BJ (cell line): ENCODE measurements at regions of chr15 and their contacts with region 1.

Region 1: DNA sequence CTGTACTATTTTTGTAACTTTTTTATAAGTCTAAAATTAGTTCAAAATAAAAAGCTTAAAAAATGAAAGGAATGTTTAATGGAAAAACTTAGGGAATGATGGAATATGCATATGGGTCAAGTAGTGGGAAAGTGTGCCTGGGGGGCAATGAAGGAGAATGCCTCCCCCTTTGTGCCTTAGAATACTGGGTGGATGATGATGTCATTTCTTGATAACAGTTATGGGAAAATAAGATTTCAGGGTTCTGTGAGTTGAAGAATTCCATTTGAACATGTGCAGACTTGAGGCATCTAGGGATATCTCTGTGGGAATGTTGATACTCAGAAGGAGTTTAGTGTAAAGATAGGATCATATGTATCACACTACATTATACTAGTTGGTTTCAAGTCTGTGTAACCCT is 13.8 kb downstream of the WDR93 start:
- DNase-seq: no peak
- H3K4me3 ChIP-seq: no peak overlapping the region
- H3K27me3 ChIP-seq: peaks cover 15% of the 10 kb centered on the region
- CTCF ChIP-seq: no peak

Region 2: GRCh38 chr15:89575146-89575655 is 129.2 kb before region 1 on chr15 and contains the start of gene TICRR:
- CTCF ChIA-PET with region 1: no interaction called
- POLR2A ChIA-PET with region 1: no interaction called
- DNase-seq: peak; percentile 99
- H3K4me3 ChIP-seq: peak within 1 kb of the TSS; percentile 87
- H3K27me3 ChIP-seq: peaks cover 3% of the 10 kb centered on the region; the same call in 1 of the 2 replicates
- CTCF ChIP-seq: no peak
- polyA plus RNA-seq, gene TICRR: 1.5 and 2.4 TPM in 2 replicates

Region 3: GRCh38 chr15:89587952-89588351 is 116.5 kb before region 1 on chr15:
- CTCF ChIA-PET with region 1: no interaction called
- POLR2A ChIA-PET with region 1: no interaction called
- DNase-seq: no peak
- H3K4me3 ChIP-seq: no peak overlapping the region
- H3K27me3 ChIP-seq: no peaks in the 10 kb centered on the region
- CTCF ChIP-seq: no peak

Region 4: GRCh38 chr15:89654847-89655805 is 49.3 kb before region 1 on chr15 and contains the start of gene KIF7:
- CTCF ChIA-PET with region 1: no interaction called
- POLR2A ChIA-PET with region 1: no interaction called
- DNase-seq: no peak
- H3K4me3 ChIP-seq: peak within 1 kb of the TSS; percentile 61
- H3K27me3 ChIP-seq: no peaks in the 10 kb centered on the region
- CTCF ChIP-seq: no peak
- polyA plus RNA-seq, gene KIF7: 5.4 and 7.5 TPM in 2 replicates

Region 5: GRCh38 chr15:91022075-91022835 is 1317.8 kb after region 1 on chr15 and contains the start of gene VPS33B:
- CTCF ChIA-PET with region 1: no interaction called
- POLR2A ChIA-PET with region 1: interaction called, 18 read pairs
- DNase-seq: peak; percentile 27
- H3K4me3 ChIP-seq: peak within 1 kb of the TSS; percentile 99
- H3K27me3 ChIP-seq: no peaks in the 10 kb centered on the region
- CTCF ChIP-seq: no peak
- polyA plus RNA-seq, gene VPS33B: 12.7 and 15.5 TPM in 2 replicates